Endothelial cell of umbilical vein (primary cell): ENCODE measurements at regions of chr11 and their contacts with region 1.

Region 1: GRCh38 chr11:110711776-110712658 is at the start of gene ARHGAP20:
- DNase-seq: peak; percentile 62
- H3K4me3 ChIP-seq: peak within 1 kb of the TSS; percentile 41 to 55 (median 55)
- H3K27ac ChIP-seq: no peak within 1 kb of the TSS
- H3K4me1 ChIP-seq: peaks cover 21% of the 10 kb centered on the region
- H3K27me3 ChIP-seq: no peaks in the 10 kb centered on the region
- CTCF ChIP-seq: no peak
- POLR2A ChIP-seq: peak; percentile 25
- total RNA-seq, gene ARHGAP20: 1.1 and 1.4 TPM in 2 replicates

Region 2: GRCh38 chr11:110463153-110463552 is 248.9 kb before region 1 on chr11:
- CTCF ChIA-PET with region 1: no interaction called
- POLR2A ChIA-PET with region 1: no interaction called
- dilution Hi-C with region 1: no loop called
- intact Hi-C with region 1: loop called (anchors 5 kb)
- DNase-seq: peak; percentile 39
- H3K4me3 ChIP-seq: no peak overlapping the region
- H3K27ac ChIP-seq: no peak overlapping the region
- H3K4me1 ChIP-seq: no peaks in the 10 kb centered on the region
- H3K27me3 ChIP-seq: no peaks in the 10 kb centered on the region
- CTCF ChIP-seq: peak; percentile 41 to 51
- POLR2A ChIP-seq: no peak

Region 3: DNA sequence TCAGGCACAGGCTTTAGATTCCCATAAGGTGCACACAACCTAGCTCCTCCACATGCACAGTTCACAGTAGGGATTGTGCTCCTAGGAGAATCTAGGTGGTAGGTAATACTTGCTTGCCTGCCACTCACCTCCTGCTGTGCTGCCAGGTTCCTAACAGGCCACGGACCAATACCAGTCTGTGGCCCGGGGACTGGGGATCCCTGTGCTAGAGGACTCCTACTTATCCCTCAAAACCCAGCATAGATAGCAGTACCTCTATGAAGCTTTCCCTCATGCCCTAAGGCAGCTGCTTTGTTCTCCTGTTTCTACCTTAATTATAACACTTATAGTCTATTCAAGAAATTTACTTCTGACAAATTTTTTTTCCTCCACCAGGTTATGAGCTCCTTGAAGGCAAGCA is 36.5 kb before region 1 on chr11:
- CTCF ChIA-PET with region 1: no interaction called
- POLR2A ChIA-PET with region 1: no interaction called
- dilution Hi-C with region 1: no loop called
- intact Hi-C with region 1: no loop called
- DNase-seq: no peak
- H3K4me3 ChIP-seq: no peak overlapping the region
- H3K27ac ChIP-seq: no peak overlapping the region
- H3K4me1 ChIP-seq: no peaks in the 10 kb centered on the region
- H3K27me3 ChIP-seq: no peaks in the 10 kb centered on the region
- CTCF ChIP-seq: no peak
- POLR2A ChIP-seq: no peak

Region 4: DNA sequence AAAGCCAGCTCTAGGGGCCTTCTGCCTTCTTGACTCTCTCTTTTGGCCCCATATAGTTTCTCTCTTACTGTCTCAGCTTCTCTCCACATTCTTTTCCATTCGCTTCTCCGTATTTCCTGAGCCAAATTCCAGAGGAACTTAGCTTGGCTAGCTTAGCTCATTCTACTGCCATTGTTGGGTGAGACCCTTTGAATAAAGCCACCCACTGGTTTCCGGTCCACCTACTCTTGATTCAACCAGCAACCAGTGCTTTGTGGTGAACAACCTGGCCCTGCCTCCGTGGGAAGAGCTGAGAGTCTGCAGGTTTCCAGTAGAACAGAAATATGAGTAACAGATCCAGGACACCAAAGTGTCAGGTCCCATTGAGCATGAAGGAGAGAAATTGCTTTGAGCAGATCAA is 81.5 kb after region 1 on chr11:
- CTCF ChIA-PET with region 1: interaction called, 3 read pairs
- POLR2A ChIA-PET with region 1: no interaction called
- dilution Hi-C with region 1: no loop called
- intact Hi-C with region 1: loop called (anchors 1 kb)
- DNase-seq: peak; percentile 51
- H3K4me3 ChIP-seq: no peak overlapping the region
- H3K27ac ChIP-seq: no peak overlapping the region
- H3K4me1 ChIP-seq: peaks cover 20% of the 10 kb centered on the region
- H3K27me3 ChIP-seq: no peaks in the 10 kb centered on the region
- CTCF ChIP-seq: no peak
- POLR2A ChIP-seq: no peak

Region 5: DNA sequence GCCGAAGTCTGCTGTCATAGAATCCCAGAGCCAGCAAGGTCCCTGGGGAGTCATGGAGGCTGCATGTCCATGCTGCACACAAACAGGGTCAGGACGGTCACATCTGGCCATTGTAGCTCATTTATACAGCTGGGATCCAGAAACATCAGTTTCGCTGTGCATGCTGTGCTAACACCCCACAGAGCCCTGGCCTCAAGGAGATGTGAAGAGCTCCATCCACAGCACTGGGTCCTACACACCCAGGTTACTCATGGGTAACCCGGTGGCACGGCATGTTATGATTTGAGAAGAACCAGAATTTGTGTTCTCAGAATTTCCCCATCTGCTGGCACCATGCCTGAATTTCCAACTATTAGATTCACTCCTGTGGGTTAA is 146.5 kb after region 1 on chr11:
- CTCF ChIA-PET with region 1: no interaction called
- POLR2A ChIA-PET with region 1: no interaction called
- dilution Hi-C with region 1: no loop called
- intact Hi-C with region 1: loop called (anchors 5 kb)
- DNase-seq: no peak
- H3K4me3 ChIP-seq: no peak overlapping the region
- H3K27ac ChIP-seq: no peak overlapping the region
- H3K4me1 ChIP-seq: peaks cover 2% of the 10 kb centered on the region
- H3K27me3 ChIP-seq: no peaks in the 10 kb centered on the region
- CTCF ChIP-seq: no peak
- POLR2A ChIP-seq: no peak